ENCODE measurements at regions of chrX and their contacts with region 1.

Region 1: DNA sequence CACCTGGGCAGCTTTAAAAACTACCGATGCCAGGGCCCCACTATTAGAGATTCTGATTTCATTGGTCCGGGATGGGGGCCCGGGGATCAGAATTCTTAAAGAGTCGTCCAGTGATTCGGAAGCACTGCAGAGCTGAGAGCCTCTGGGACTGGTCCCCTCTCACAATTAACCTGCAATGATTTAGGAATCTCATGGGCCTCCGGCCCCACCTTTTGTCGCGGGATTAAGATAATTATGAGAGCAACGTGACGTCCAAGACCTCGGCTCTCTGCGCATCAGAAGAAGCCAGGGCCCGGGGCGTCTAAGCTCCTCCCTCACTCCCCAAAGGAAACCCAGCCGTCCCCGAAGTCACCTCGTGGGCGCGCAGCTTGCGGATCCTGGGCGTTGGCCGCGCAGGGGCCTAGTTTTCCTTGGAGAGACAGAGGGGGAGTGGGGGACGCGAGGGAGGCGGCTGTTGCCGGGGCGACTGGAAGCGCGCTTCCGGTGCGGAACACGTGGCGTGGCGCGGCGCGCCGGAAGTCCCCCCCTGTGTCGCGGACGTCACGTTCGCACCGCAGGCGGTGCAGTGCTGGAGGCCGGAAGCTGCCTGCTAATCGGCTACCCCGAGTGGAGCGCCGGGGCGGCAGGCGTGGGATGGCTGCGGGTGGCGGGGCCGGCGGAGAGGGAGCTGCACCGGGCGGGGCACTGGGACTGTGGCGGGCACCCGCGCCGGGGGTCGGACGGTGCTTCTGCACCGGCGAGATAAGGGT is at the start of gene GEMIN8:
- DNase-seq: peak; percentile 76
- ATAC-seq: peak; percentile 91
- H3K4me3 Mint-ChIP-seq: peak within 1 kb of the TSS; percentile 94
- H3K27ac Mint-ChIP-seq: peak within 1 kb of the TSS; percentile 97
- H3K4me1 Mint-ChIP-seq: peaks cover 30% of the 10 kb centered on the region
- H3K27me3 Mint-ChIP-seq: no peaks in the 10 kb centered on the region
- CTCF ChIP-seq: no peak
- total RNA-seq, gene GEMIN8: 19.3 and 19.9 TPM in 2 replicates

Region 2: DNA sequence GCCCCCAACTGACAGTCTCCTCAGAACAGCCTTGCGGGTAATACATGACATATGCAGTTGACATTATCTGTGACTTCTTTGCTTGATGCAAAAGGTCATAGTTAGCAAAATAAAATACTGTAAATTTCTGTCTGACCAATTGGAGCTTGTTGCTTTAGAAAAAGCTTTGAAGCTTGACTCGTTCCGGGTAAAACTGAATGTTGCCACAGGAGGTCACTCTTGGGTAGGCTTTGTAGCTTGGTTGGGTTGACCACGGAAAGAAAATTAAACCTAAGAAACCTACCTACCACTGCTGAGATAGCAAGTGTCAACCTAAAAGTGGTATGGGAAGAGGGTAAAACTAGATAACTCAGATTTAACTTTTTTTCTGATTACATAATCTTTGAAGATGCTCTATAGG is 1215.2 kb before region 1 on chrX:
- CTCF ChIA-PET with region 1: no interaction called
- POLR2A ChIA-PET with region 1: no interaction called
- intact Hi-C with region 1: loop called (anchors 5 kb)
- DNase-seq: no peak
- ATAC-seq: peak; percentile 71
- H3K4me3 Mint-ChIP-seq: no peak overlapping the region
- H3K27ac Mint-ChIP-seq: no peak overlapping the region
- H3K4me1 Mint-ChIP-seq: no peaks in the 10 kb centered on the region
- H3K27me3 Mint-ChIP-seq: no peaks in the 10 kb centered on the region
- CTCF ChIP-seq: no peak

Region 3: DNA sequence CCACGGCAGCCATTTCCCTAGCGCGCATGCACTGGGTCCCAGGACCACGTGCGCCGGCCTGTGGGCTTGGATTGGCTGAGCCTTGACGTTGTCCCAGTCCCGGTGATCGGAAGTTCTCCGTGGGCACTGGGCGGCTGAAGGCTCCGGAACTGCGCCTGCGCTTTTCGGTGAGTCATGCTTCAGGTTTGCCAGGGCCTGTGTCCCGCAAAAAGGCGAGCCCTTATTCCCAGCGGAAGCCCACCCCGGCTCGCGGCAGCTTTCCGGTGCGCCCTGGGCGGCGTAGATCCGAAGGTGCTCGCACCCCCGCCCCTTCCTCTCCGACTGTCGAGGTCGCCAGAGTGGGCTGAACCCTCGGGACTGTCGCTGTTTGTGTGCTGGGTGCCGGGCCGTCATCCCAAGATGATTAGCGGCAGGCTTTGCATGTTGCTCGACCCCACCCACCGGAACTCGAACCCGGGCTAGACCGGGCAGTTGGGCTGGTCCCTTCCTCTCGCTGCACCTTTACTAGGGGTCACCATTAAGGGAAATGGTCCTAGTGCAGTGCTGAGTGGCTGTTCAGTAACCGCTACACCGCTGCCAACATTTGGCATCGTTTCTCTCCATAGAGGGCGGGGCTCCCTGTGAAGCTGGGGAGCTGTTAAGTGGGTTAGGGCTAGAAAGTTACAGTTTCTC is 376.4 kb before region 1 on chrX and contains the start of gene TCEANC:
- CTCF ChIA-PET with region 1: interaction called, 3 read pairs
- POLR2A ChIA-PET with region 1: interaction called, 3 read pairs
- intact Hi-C with region 1: loop called (anchors 1 kb)
- DNase-seq: peak; percentile 79
- ATAC-seq: peak; percentile 93
- H3K4me3 Mint-ChIP-seq: peak within 1 kb of the TSS; percentile 91
- H3K27ac Mint-ChIP-seq: peak within 1 kb of the TSS; percentile 91
- H3K4me1 Mint-ChIP-seq: peaks cover 13% of the 10 kb centered on the region
- H3K27me3 Mint-ChIP-seq: no peaks in the 10 kb centered on the region
- CTCF ChIP-seq: no peak
- total RNA-seq, gene TCEANC: 5.1 and 5.9 TPM in 2 replicates

Region 4: GRCh38 chrX:13734278-13735172 is 295.1 kb before region 1 on chrX and contains the starts of genes OFD1 and TRAPPC2:
- CTCF ChIA-PET with region 1: interaction called, 3 read pairs
- POLR2A ChIA-PET with region 1: interaction called, 14 read pairs
- intact Hi-C with region 1: loop called (anchors 1 kb)
- DNase-seq: peak; percentile 80
- ATAC-seq: peak; percentile 81
- H3K4me3 Mint-ChIP-seq: peak within 1 kb of the TSS; percentile 93
- H3K27ac Mint-ChIP-seq: peak within 1 kb of the TSS; percentile 92
- H3K4me1 Mint-ChIP-seq: peaks cover 60% of the 10 kb centered on the region
- H3K27me3 Mint-ChIP-seq: no peaks in the 10 kb centered on the region
- CTCF ChIP-seq: no peak
- total RNA-seq, gene OFD1: 57.3 and 61.4 TPM in 2 replicates
- total RNA-seq, gene TRAPPC2: 24.7 and 26.7 TPM in 2 replicates

Region 5: DNA sequence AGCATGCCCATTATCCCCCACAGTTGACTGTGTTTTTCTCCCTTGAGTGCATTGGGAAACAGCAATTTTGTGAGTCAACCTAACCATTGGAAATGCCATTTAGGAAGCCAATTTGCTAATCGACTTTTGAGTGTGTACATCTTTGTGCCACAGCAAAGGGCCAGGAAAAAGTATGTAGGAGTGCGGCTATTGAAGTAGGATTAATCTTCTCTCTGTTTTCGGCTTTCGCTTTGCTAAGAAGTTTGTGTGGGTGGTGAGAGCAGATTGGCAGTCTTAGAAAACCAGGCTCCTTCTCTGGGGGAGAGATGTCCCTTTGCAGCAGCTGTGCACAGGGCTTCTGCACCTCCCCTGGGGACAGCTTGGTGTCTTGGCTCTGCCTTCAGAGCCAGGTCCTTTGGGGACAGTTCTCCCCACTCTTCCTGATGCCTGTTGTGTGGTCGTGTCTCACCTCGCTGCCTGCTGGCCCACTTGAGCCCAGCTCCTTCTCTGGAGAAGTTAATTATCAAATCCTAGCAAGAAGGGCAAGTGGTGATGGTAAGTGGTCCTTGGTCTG is 74.4 kb before region 1 on chrX:
- CTCF ChIA-PET with region 1: no interaction called
- POLR2A ChIA-PET with region 1: no interaction called
- intact Hi-C with region 1: no loop called
- DNase-seq: no peak
- ATAC-seq: no peak
- H3K4me3 Mint-ChIP-seq: no peak overlapping the region
- H3K27ac Mint-ChIP-seq: no peak overlapping the region
- H3K4me1 Mint-ChIP-seq: no peaks in the 10 kb centered on the region
- H3K27me3 Mint-ChIP-seq: no peaks in the 10 kb centered on the region
- CTCF ChIP-seq: no peak

Region 6: DNA sequence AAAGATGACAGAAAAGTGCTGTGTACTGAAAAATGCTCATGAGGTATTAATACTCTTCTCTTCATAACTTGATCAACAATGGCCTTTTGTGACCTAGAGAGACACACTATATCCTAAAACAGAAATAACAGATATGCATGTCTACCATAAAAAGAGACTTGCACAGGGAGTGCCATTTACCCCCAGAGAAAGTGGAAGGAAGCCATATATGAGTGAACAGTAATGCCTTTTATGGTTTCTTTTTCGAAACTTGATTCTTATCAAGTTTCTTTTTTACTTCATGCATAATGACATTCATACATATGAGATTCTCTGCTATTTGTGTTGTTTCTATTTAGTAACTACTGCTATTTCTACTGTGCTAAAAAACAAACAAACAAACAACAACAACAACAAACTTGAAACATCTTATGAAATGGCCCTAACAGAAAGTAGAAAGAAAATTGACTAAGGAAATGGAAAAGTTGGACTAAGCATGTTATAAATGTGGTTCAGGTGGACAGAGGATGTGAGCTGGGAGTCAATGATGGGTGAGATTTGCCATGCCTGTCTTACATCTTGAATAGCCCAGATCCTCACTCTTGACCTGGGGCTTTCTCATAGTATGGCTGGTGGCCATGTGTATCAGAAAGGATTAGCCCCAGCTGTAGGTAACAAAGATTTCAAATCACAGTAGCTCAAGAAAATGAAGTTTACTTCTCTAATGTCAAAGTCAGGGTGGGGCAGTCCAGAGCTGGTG is 43.7 kb before region 1 on chrX:
- CTCF ChIA-PET with region 1: no interaction called
- POLR2A ChIA-PET with region 1: no interaction called
- intact Hi-C with region 1: no loop called
- DNase-seq: no peak
- ATAC-seq: no peak
- H3K4me3 Mint-ChIP-seq: no peak overlapping the region
- H3K27ac Mint-ChIP-seq: no peak overlapping the region
- H3K4me1 Mint-ChIP-seq: peaks cover 8% of the 10 kb centered on the region
- H3K27me3 Mint-ChIP-seq: no peaks in the 10 kb centered on the region
- CTCF ChIP-seq: no peak

Region 7: DNA sequence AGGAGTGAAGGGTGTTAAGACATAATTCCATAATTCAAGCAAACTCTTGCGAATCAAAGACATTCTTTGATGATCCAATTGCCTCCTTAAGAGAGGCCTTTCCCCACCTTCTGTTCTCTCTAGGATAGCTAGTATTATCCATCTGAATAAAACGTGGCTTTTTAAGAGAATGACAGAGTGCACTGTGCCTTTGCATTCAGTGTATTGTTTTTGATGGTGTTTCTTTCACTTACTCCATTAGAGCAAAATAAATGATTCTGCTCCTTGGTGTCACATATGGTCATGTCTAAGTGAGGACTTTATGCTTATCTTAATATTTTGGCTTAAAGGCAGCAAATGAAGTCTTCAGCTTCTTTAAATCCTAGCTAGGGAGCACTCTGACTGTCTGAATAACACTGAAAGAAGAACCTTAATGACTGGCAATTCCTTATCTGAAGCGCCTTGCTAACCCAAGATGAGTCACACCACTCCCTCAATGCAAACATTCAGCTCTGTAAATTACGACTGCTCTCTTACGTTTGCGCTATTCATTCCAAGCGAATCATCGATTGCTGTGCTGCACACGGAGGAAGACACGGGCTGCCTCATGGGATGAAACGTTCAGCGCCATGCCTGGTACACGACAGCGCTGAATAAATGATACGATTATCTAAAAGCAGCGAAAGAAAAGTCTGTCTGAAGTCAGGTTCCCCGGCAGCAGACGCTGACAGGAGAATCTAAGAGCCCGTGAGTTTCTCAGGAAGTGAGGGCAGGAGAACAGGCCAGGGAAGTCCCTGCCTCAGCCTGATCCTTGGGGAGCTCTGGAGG is 35.2 kb after region 1 on chrX:
- CTCF ChIA-PET with region 1: no interaction called
- POLR2A ChIA-PET with region 1: no interaction called
- intact Hi-C with region 1: no loop called
- DNase-seq: no peak
- ATAC-seq: no peak
- H3K4me3 Mint-ChIP-seq: no peak overlapping the region
- H3K27ac Mint-ChIP-seq: no peak overlapping the region
- H3K4me1 Mint-ChIP-seq: no peaks in the 10 kb centered on the region
- H3K27me3 Mint-ChIP-seq: peaks cover 3% of the 10 kb centered on the region
- CTCF ChIP-seq: no peak

Region 8: GRCh38 chrX:14673764-14674163 is 644.2 kb after region 1 on chrX:
- CTCF ChIA-PET with region 1: no interaction called
- POLR2A ChIA-PET with region 1: no interaction called
- intact Hi-C with region 1: loop called (anchors 5 kb)
- DNase-seq: peak; percentile 12
- ATAC-seq: peak; percentile 90
- H3K4me3 Mint-ChIP-seq: peak overlapping the region; percentile 35
- H3K27ac Mint-ChIP-seq: peak overlapping the region; percentile 80
- H3K4me1 Mint-ChIP-seq: peaks cover 56% of the 10 kb centered on the region
- H3K27me3 Mint-ChIP-seq: no peaks in the 10 kb centered on the region
- CTCF ChIP-seq: no peak

Measured in activated B cell treated with CpG ODN at 0.5 μM for 24 hours (primary cell).